Activated B cell treated with CpG ODN at 0.5 μM for 24 hours (primary cell): ENCODE measurements at regions of chr20 and their contacts with region 1.

Region 1: GRCh38 chr20:3485913-3486312 is 15.1 kb downstream of the ATRN start:
- DNase-seq: no peak
- ATAC-seq: no peak
- H3K4me3 Mint-ChIP-seq: no peak overlapping the region
- H3K27ac Mint-ChIP-seq: no peak overlapping the region
- H3K4me1 Mint-ChIP-seq: peaks cover 7% of the 10 kb centered on the region
- H3K27me3 Mint-ChIP-seq: no peaks in the 10 kb centered on the region
- CTCF ChIP-seq: no peak

Region 2: DNA sequence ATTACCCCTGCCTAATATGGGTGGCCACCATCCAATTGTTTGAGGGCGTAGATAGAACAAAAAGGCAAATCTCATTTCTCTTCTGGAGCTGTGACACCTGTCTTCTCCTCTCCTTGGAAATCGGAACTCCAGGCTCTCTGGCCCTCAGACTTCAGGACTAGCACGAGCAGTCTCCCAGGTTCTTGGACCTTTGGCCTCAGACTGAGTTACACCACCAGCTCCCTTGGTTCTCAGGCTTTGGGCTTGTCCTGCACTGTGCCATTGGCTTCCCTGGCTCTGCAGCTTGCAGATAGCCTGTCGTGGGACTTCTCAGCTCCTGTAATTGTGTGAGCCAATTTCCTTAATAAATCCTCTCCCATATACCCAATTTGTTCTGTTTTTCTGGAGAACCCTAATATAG is 19.2 kb after region 1 on chr20:
- CTCF ChIA-PET with region 1: no interaction called
- POLR2A ChIA-PET with region 1: no interaction called
- intact Hi-C with region 1: loop called (anchors 2 kb)
- DNase-seq: no peak
- ATAC-seq: no peak
- H3K4me3 Mint-ChIP-seq: no peak overlapping the region
- H3K27ac Mint-ChIP-seq: no peak overlapping the region
- H3K4me1 Mint-ChIP-seq: no peaks in the 10 kb centered on the region
- H3K27me3 Mint-ChIP-seq: no peaks in the 10 kb centered on the region
- CTCF ChIP-seq: no peak